Right ventricle myocardium superior (tissue), 1 donor: ENCODE measurements at regions of chr20 and their contacts with region 1.

Region 1: DNA sequence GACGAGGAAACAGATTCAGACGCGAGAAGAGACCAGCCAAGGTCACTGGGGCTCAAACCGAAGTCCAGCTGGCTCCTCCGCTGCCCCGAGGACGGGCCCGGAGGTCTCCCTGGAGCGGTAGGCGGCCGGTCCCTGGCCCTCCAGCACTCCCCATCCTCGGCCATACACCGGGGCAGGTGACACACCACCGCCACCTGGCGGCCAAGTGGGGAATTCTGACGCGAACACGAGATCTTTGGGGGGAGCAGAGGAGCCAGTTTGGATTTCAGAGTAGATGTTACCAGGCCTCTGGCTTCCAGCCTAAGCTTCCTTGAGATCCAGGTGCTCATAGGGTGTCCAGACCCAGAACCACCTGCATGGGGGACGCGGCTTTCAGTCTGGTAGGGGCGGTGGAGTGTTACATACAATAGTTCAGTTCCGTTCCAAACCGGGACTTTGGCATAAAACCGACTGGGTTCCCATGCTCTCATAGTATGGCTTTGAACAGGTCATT is 16.1 kb downstream of the BPIFB1 start:
- DNase-seq: peak; percentile 77
- ATAC-seq: peak; percentile 74

Region 2: DNA sequence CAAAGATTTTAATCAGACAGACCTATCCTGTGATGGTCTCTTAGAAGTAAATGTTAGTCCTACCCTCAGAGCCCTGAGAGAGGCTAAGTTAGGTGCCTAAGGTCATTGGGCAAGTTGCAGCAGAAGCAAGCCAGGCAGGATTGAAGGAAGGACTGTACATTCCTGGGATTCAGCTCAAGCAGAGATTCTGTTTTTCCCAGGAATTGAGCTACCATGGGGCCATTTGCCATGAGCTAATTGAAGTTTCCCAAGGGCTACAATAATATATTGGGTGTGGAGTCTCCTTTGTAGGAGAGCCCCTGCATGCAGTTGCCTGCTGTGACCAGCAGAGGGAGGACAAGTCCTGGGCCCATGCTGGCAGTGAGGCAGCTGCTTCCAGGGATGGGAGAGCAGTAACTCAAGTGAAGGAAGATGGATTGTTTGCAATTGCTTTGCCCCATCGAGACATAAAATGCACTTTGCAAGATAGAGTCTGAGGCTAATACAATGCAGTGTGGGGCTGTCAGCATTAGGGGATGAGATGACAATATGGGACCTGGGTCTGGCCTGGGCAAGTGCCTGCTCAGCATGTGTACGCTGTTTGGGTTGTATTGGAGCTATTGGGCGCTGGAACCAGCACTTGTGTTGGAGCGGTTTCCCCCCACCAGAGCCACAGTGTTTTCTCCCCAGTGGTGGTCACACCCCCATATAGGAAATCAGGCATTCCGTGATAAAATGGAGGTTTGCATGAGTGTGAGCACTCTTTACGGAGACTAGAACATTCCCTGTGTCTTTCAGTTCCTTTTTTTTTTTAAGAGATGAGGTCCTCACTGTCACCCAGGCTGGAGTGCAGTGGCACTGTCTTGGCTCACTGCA is 509.0 kb before region 1 on chr20:
- intact Hi-C with region 1: loop called (anchors 10 kb)
- DNase-seq: peak; percentile 78
- ATAC-seq: peak; percentile 93

Region 3: GRCh38 chr20:32902456-32903420 is 396.4 kb before region 1 on chr20:
- intact Hi-C with region 1: loop called (anchors 5 kb)
- DNase-seq: peak; percentile 65
- ATAC-seq: peak; percentile 82

Region 4: DNA sequence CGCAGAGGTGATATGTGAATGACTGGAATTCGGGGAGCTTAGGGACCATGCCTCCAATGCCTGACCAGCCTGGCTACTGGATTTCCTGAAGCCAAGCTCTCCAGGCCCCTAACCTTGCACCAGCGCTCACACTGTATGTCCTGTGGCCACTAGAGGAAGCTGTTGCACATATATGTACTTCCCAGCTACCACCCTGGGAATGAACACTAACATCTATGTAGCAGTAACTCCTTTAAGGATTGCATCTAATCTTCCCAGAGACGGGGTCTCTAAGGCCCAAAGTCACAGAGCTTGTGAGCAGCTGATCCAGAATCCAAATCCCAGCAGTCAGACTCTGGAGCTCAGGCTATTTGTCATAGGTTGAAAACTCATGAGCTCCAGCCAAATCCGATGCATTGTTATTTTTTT is 36.5 kb before region 1 on chr20:
- intact Hi-C with region 1: no loop called
- DNase-seq: no peak
- ATAC-seq: no peak